Gastrocnemius medialis (tissue), 4 donors: ENCODE measurements at regions of chr22 and their contacts with region 1.

Region 1: GRCh38 chr22:37623075-37624016 is 14.7 kb downstream of the GGA1 start:
- DNase-seq: peak in 1 of 2 donors; percentile 60
- ATAC-seq: peak; percentile 33 to 45
- H3K4me3 ChIP-seq: no peak overlapping the region
- H3K27ac ChIP-seq: no peak overlapping the region
- H3K4me1 ChIP-seq: peaks cover 14 to 15% of the 10 kb centered on the region in 2 donors
- H3K27me3 ChIP-seq: no peaks in the 10 kb centered on the region
- CTCF ChIP-seq: peak; percentile 36 to 91 (median 64)
- POLR2A ChIP-seq: no peak

Region 2: GRCh38 chr22:37686002-37686982 is 62.9 kb after region 1 on chr22 and contains the start of gene NOL12:
- in situ Hi-C with region 1: loop called in 2 of 4 experiments (anchors 10 kb)
- intact Hi-C with region 1: no loop called
- DNase-seq: peak; percentile 64 to 78
- ATAC-seq: peak; percentile 93 to 95
- H3K4me3 ChIP-seq: peak within 1 kb of the TSS; percentile 96 to 100 (median 96)
- H3K27ac ChIP-seq: peak within 1 kb of the TSS; percentile 91 to 99 (median 96)
- H3K4me1 ChIP-seq: peaks cover 16 to 18% of the 10 kb centered on the region in 2 donors
- H3K27me3 ChIP-seq: no peaks in the 10 kb centered on the region
- CTCF ChIP-seq: no peak
- POLR2A ChIP-seq: peak; percentile 28 to 45
- total RNA-seq, gene NOL12: 10.0 to 21.7 (median 16.6) TPM

Region 3: GRCh38 chr22:37696657-37697537 is 73.6 kb after region 1 on chr22 and contains the start of gene TRIOBP:
- in situ Hi-C with region 1: loop called in 1 of 4 experiments (anchors 10 kb)
- intact Hi-C with region 1: no loop called
- DNase-seq: peak; percentile 86 to 89
- ATAC-seq: peak; percentile 96 to 97
- H3K4me3 ChIP-seq: peak within 1 kb of the TSS; percentile 21 to 43 (median 34)
- H3K27ac ChIP-seq: no peak within 1 kb of the TSS
- H3K4me1 ChIP-seq: peaks cover 7 to 11% of the 10 kb centered on the region in 2 donors
- H3K27me3 ChIP-seq: no peaks in the 10 kb centered on the region
- CTCF ChIP-seq: peak; percentile 21 to 59 (median 46)
- POLR2A ChIP-seq: no peak
- total RNA-seq, gene TRIOBP: 21.7 to 38.2 (median 30.3) TPM